GM18951 (cell line): ENCODE measurements at regions of chr2 and their contacts with region 1.

Region 1: DNA sequence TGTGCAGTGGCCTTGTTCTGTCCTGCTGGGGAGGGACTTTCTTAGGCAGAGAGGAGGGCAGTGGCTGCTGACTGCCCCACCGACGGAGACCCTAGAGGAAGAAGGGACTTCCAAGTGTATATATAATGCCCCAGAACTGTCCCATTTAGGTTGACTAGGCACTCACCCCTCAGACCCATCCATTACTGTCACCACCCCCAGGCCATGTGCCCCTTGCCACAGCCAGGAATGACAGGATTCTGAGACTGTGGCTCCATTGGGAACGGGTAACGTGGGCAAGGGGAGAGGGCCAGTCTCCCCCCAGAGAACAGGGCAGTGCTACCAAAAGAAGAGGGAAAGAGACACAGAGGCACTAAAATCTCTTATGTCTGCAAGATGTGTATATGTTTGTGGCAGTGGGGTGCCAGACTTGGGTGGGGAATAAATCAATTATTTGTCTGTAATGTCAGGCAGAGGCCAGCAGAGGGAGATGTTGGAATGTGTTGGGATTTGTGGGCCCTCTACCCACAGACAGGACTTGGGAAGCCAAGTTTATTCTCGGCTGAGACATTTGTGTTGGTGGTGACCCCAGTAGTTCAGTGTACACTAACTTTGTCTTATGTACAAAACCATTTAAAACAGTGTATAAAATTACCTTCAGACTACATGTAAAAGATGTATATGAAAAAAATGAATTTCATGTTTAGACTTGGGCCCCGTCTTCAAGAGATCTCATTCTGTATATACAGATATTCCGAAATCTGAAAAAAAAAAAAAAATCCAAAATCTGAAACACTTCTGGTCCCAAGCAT is 24.0 kb upstream of the TMEM37 start:
- POLR2A ChIP-seq: no peak

Region 2: DNA sequence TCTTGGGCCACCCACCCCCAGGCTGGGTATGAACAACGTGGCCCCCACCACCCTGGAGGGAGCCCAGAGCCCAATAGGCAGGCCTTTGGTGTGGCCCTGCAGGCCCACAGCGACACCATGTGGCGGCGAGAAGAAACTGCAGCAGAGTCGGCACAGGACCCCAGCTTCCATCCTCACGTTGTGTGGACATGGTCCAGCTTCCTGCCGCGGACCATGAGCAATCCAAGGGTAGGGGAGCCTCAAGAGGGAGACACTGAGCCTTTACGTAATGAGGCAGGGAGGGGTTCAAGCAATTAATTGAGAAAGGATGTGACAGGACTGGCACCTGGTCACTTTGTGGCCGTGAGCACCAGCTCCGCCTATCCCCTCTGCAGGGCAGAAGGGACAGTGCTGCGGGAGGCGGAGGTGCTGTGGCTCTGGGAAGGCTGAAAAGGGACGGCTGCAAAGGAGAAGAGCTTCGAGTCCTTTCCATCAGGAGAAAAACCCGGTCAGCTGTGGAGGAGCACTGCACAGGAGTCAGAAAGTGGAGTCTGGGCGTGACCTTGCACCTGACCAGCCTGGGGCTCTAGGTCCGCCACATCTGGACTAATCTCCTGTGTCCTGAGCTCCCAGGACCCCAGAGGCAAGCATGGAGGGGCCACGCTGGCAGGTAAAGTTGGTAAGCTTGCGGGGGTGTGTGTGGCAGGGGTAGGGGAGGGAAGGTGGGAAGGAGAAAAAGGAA is 68.8 kb after region 1 on chr2:
- in situ Hi-C with region 1: loop called (anchors 10 kb)
- POLR2A ChIP-seq: no peak

Region 3: DNA sequence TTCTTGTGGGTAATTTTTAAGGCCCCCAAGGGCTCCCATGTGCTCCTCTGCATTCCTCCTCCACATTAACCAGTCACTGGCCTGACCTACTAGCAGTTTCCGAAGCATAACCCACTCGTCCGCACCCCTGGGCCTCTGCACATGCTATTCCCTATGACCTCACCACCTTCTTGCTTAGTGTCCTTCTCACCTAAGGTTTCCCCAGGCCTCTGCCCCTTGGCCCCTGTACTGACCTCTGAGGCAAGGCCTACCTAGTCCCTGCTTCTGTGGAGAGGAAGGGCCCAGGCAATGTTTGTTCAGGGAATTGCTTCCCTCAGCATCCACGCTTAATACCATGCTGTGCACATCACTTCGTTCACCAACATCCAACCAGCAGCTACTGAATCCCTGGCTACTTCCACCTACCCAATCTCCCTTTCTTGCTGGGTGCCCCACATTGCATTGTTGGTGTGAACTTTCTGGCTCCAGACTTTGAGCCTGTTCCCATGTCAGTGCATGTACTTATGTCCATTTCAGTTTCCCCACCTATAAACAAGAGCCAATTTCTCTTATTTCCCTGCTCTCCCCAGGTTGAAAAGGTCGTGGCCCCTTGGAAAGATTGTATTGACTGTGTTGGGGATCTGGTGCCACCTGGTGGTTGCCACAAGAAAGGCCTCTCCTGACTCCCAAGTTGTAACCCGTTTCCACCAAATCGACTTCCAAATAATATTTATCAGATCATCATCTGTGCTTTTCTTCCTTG is 252.1 kb after region 1 on chr2:
- in situ Hi-C with region 1: loop called (anchors 25 kb)
- POLR2A ChIP-seq: no peak